Activated naive CD8-positive, alpha-beta T cell treated with anti-CD3 and anti-CD28 coated beads, Interleukin-2, amount 10 ng/mL, durations not matched to agents 7 days and 5 days (primary cell): ENCODE measurements at regions of chr1 and their contacts with region 1.

Region 1: DNA sequence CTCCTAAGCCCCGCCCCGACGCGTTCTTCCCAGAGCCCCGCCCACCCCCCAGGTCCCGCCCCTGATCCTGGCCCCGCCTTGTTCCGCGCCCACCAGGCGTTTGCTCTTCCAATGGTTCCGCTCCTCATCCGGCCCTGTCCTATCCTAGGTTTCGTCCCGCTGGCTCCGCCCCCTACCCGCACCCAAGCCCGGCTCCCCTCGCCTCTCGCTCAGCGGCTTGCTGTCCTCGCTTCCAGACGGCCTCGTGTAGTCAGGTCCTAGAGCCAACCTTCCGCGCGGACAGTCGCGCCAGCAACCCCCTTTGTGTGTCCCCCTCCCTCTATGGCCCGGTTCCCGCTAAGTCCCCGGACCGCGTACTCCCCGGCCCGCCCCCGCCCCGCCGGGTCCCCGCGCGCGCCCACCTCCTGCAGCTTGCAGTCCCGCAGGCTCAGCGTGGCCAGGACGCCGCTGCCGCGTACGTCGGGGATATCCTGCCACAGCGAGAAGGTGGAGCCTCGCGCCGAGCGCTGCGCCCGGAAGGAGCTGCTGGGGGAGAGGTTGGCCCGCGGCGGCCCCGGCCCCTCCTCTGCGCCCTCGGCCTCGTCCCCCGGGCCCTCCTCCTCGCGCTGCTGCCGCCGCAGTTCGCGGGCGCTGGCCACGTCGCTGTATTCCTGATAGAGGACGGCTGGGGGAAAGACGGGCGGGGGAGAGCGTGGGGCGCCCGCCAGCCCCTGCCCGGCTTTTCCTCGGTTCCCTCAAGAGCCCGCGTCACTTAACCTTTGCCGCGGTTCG is 5.7 kb downstream of the ARHGEF19 start:
- DNase-seq: peak; percentile 94
- ATAC-seq: peak; percentile 94
- H3K4me3 Mint-ChIP-seq: peak overlapping the region; percentile 78
- H3K27ac Mint-ChIP-seq: peak overlapping the region; percentile 98
- H3K4me1 Mint-ChIP-seq: peaks cover 2% of the 10 kb centered on the region
- H3K27me3 Mint-ChIP-seq: peaks cover under 1% of the 10 kb centered on the region

Region 2: GRCh38 chr1:16217061-16217785 is 10.5 kb after region 1 on chr1:
- POLR2A ChIA-PET with region 1: interaction called, 31 read pairs
- DNase-seq: peak; percentile 96
- ATAC-seq: peak; percentile 96
- H3K4me3 Mint-ChIP-seq: peak overlapping the region; percentile 91
- H3K27ac Mint-ChIP-seq: peak overlapping the region; percentile 84
- H3K4me1 Mint-ChIP-seq: peaks cover 27% of the 10 kb centered on the region
- H3K27me3 Mint-ChIP-seq: peaks cover 9% of the 10 kb centered on the region

Region 3: DNA sequence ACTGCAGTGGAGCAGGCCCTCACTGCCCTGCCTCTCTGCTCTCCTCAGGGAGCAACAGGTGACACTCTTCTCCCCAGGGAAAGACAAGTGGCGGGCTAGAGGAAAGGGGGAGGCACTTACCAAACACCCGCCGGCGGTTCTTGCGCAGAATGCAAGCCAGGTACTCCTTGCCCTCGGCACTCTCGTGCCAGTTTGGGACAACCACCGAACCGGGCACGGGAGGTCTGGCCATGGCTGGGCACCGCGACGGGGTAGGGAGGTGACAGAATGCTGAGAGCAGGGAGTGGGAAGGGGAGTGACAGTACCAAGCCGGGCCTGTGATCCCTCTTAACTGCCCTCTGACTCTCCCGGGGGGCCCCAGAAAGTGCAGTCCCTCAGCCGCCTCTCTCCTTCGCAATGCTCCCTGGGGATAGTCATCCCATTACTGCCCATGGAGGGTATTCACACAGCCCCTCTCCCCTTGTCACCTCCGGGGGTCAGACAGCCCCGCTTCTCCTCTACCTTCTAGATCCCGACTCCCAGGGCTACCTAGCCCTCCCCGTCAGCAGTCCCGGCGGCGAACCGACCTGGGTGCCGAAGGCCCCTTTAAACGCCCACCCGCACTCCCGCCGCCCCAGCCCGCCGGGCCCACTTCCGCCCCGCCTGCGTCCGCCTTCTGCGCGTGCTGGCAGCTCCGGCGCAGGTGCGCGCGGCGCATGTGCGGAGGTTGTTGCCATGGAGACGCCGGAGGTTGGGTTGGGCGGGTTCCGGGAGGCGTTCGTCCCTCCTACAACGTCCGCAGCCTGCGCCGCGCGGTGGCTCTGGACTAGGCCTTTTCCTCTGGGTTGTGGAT is 30.0 kb after region 1 on chr1 and contains the start of gene CPLANE2:
- POLR2A ChIA-PET with region 1: interaction called, 12 read pairs
- DNase-seq: peak; percentile 97
- ATAC-seq: peak; percentile 90
- H3K4me3 Mint-ChIP-seq: peak within 1 kb of the TSS; percentile 93
- H3K27ac Mint-ChIP-seq: peak within 1 kb of the TSS; percentile 87
- H3K4me1 Mint-ChIP-seq: peaks cover 22% of the 10 kb centered on the region
- H3K27me3 Mint-ChIP-seq: no peaks in the 10 kb centered on the region
- total RNA-seq, gene CPLANE2: 6.8 to 7.3 TPM

Region 4: DNA sequence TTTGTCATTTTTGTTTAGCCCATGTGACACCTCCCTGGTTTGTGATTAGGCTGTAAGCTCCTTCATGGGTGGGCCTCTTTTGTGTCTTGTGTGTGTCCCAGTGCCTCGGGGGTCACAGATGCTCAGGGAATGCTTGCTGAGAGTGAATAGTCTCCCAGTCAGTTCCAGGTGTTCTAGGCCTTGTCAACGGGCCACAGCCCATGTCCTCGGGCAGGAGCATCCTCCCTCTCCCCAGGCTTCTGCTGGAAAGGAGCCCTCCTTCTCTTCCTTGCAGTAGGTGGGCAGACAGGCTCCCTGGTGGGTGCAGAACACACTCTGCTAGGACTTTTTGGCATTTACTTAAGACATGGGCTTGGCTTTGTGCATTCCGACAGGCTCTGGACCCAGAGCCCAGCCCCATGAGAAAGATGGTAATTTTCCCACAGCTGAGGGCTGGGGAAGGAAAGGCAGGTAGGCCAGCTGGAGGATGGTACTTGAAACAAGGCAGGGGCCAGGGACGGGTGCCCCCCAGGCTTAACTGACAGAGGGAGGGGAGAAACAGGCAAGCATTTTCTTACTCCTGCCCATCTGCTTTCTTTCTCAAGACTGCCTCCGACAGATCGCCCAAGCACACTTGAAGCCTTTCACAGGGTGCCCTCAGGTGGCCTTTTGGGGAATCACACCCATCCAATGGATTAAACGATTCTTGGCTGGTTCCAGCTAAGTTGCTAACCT is 37.4 kb after region 1 on chr1:
- POLR2A ChIA-PET with region 1: interaction called, 12 read pairs
- DNase-seq: peak; percentile 74
- ATAC-seq: peak; percentile 78
- H3K4me3 Mint-ChIP-seq: no peak overlapping the region
- H3K27ac Mint-ChIP-seq: no peak overlapping the region
- H3K4me1 Mint-ChIP-seq: peaks cover 18% of the 10 kb centered on the region
- H3K27me3 Mint-ChIP-seq: no peaks in the 10 kb centered on the region